OCI-LY7 (cell line): ENCODE measurements at regions of chr2 and their contacts with region 1.

Region 1: DNA sequence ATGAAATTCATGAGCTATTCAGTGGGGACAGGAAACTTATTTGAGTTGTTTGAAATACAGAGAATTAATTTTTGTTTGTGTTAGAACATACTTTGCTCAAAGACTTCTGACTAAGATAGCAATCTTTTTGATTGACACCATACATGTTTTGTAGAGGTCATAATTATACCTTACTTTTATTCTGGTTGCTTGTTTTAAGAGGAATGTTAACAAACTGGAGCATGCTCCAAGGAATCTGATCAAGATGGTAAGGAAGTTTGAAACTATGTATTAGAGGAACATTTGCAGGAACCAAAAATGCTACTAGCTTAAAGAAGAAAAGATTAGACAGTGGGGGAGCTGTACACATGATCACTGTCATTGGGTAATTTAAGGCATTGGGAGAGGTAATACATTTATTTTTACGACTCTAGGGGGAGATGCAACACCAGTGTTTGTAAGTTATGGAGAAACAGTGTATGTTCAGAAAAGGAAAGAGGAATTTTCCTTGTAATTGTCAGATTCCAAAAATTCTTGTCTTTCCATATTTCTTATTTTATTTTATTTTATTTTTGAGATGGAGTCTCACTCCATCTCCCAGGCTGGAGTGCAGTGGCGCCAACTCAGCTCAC is 8.0 kb downstream of the AGFG1 start:
- DNase-seq: peak; percentile 31
- H3K4me3 ChIP-seq: no peak overlapping the region
- H3K27ac ChIP-seq: no peak overlapping the region
- H3K4me1 ChIP-seq: peaks cover 39% of the 10 kb centered on the region
- CTCF ChIP-seq: peak; percentile 74

Region 2: DNA sequence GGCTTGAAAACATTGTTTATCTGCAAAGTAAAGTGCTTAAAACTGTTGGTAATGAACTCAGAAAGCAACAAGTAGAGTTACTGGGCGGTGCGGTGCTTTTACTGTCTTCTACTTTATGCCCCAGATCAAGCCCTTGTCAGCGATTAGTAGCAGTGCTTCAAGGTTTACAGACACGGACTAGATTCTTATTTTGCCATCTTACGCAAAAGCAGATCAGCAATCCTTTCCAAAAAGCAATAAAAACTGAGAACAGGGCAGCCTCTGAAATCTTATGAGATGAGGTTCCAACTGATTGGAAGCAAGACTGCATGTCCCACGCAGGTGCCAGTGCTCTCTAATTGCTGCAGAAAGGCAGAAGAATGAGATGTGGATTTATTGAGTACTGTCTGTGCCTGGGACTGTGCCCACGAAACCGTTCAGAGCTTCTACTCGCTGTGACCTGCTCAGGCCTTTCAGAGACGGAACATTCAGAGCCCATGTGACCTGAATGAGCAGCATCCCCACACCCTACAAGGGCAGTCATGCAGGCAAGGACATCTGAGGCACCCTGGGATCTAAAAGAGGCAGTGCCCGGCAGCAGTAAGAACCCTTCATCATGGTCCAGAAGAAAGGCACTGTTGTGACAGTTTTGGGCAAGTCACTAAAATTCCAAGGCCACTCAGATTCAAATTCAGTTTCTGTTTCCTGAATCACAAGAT is 299.8 kb before region 1 on chr2:
- CTCF ChIA-PET with region 1: no interaction called
- POLR2A ChIA-PET with region 1: no interaction called
- intact Hi-C with region 1: no loop called
- DNase-seq: no peak
- H3K4me3 ChIP-seq: no peak overlapping the region
- H3K27ac ChIP-seq: no peak overlapping the region
- H3K4me1 ChIP-seq: no peaks in the 10 kb centered on the region
- CTCF ChIP-seq: no peak

Region 3: GRCh38 chr2:227551836-227552235 is 71.9 kb after region 1 on chr2:
- CTCF ChIA-PET with region 1: no interaction called
- POLR2A ChIA-PET with region 1: no interaction called
- intact Hi-C with region 1: loop called (anchors 5 kb)
- DNase-seq: no peak
- H3K4me3 ChIP-seq: no peak overlapping the region
- H3K27ac ChIP-seq: no peak overlapping the region
- H3K4me1 ChIP-seq: no peaks in the 10 kb centered on the region
- CTCF ChIP-seq: no peak

Region 4: DNA sequence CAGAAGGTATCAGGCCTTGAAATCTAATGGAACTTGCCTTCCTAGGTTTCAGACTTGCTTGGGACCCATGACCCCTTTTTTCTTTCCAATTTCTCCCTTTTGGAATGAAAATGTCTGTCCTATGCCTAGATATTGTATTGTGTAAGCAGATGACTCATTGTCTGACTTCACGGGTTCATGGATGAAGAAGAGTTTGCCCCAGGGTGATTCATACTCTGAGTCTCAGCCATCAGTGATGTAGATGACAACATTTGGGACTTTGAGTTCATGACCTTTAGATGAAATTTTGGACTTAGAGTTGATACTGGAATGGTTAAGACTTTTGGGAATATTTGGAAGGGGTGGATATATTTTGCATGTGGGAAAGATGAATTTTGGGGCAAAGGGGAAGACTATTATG is 175.5 kb after region 1 on chr2:
- CTCF ChIA-PET with region 1: interaction called, 3 read pairs
- POLR2A ChIA-PET with region 1: no interaction called
- intact Hi-C with region 1: loop called (anchors 5 kb)
- DNase-seq: no peak
- H3K4me3 ChIP-seq: no peak overlapping the region
- H3K27ac ChIP-seq: no peak overlapping the region
- H3K4me1 ChIP-seq: no peaks in the 10 kb centered on the region
- CTCF ChIP-seq: no peak